GM12878 (cell line): ENCODE measurements at regions of chr11 and their contacts with region 1.

Region 1: DNA sequence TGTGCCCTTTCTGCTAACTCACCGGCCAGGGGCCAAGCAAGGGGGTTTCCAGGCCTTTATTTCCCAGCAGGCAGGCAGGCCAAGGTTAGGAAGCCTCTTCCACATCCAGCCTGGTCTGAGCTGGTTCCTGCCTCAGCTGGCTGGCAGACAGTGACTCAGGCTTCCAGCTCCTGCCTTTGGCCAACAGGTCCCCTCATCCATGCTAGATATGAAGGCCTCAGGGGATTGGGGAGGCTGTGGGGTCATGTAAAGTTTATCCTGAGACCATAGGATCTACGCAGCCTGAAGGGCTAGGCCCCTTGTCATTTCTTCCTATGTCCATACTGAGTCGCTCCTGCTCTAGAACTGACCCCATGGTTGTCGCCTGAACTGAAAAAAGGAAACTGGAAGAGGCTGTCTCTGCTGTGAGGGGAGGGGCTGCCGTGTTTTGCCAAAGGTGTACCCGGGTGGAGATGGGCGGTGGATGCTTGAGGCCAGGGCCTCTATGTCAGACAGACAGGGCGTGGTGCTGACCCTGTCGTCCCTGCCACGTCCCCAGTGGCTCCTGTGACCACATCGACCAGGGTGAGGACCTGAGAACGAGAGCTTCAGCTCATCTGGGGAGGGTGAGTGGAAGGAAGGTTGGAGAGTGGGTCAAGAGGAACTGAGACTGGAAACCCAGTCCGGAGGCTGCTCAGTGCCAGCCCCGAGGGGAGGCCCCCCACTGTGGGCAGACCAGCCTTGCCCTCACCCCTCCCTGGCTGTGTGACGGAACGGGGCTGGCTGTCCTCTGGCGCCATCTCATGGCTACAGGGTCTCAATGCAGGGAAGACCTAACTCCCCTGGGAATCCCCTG is 17.0 kb downstream of the P2RY6 start:
- DNase-seq: peak; percentile 70
- ATAC-seq: peak; percentile 95
- H3K4me3 ChIP-seq: 0 out of 2 replicates have a peak overlapping the region, but pooled peaks have one; percentile 9
- H3K27ac ChIP-seq: peak overlapping the region; percentile 49
- H3K4me1 ChIP-seq: peaks cover 23% of the 10 kb centered on the region
- H3K27me3 ChIP-seq: no peaks in the 10 kb centered on the region; a peak in 2 of 4 replicates
- CTCF ChIP-seq: peak; percentile 92 to 99 (median 97)
- EP300 ChIP-seq: 0 out of 4 replicates have a peak, but pooled peaks of 1 of the 2 experiments have one; percentile 6
- POLR2A ChIP-seq: no peak
- RAD21 ChIP-seq: peak; percentile 94

Region 2: DNA sequence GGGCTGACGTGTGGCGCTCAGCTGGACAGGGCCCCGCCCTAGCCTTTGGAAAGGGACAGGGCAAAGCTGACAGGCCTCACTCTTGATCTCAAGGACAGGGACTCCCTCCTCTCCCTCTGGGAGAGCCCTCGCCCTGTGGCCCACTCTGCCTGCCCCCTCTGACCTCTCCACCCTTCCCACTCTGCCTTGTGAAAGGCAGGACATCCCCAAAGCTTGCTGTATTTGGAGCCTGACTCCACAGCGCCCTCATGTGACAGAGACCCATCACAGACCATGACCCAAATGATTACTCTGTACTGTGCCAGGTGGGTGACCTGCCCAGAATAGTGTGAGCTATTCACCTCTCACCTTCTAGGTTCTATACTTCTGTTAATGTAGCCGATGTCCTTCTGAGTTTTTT is 52.2 kb before region 1 on chr11:
- CTCF ChIA-PET with region 1: interaction called, 25 read pairs
- POLR2A ChIA-PET with region 1: no interaction called
- RAD21 ChIA-PET with region 1: interaction called, 18 read pairs
- SMC1A ChIA-PET with region 1: interaction called, 4 read pairs
- in situ Hi-C with region 1: no loop called
- intact Hi-C with region 1: loop called (anchors 1 kb)
- DNase-seq: no peak
- ATAC-seq: peak; percentile 84
- H3K4me3 ChIP-seq: no peak overlapping the region
- H3K27ac ChIP-seq: no peak overlapping the region
- H3K4me1 ChIP-seq: peaks cover 2% of the 10 kb centered on the region
- H3K27me3 ChIP-seq: no peaks in the 10 kb centered on the region
- CTCF ChIP-seq: peak; percentile 69 to 82 (median 72)
- EP300 ChIP-seq: no peak
- POLR2A ChIP-seq: no peak
- RAD21 ChIP-seq: peak; percentile 76

Region 3: DNA sequence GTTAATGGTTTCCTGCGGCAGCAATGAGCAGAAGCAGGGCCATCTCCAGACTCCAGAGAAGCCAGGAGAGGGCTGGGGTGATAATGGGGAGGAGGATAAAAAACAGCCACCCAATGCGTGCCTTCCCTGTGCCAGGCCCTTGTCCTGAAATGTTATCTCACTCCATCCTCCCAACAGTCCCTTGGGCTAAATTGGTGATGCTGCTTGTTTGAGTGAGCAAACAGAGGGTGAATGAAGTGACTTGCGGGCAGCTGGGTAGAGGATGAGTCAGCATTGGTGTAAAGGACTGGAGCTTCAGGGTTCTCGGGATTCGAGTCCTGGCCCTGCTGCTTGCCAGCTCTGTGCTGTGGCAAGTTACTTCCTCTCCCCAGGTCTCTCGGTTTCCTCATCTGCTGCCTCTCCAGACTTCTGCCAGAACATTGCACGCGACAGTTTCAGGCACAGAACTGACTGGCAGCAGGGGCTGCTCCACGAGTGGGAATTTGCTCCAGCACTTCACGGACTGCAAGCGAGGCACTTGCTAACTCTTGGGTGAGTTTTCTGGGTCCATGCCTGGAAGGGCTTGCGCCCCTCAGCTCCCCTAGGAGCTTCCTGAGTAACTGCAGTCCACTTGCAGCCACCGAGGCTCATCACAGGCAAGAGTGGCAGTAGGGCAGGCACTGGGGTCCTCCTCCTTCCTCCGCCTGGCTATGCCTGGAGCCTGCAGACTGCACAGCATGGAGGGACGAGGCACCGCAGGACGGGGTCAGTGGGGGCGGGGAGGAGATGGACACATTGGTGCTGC is 17.0 kb before region 1 on chr11 and contains the start of gene P2RY6:
- CTCF ChIA-PET with region 1: interaction called, 6 read pairs
- POLR2A ChIA-PET with region 1: interaction called, 4 read pairs
- RAD21 ChIA-PET with region 1: interaction called, 3 read pairs
- SMC1A ChIA-PET with region 1: interaction called, 11 read pairs
- in situ Hi-C with region 1: no loop called
- intact Hi-C with region 1: no loop called
- DNase-seq: no peak
- ATAC-seq: peak; percentile 71
- H3K4me3 ChIP-seq: peak within 1 kb of the TSS; percentile 3; the same call in 1 of the 2 replicates
- H3K27ac ChIP-seq: no peak within 1 kb of the TSS; the same call in 1 of the 2 replicates
- H3K4me1 ChIP-seq: peaks cover 36% of the 10 kb centered on the region
- H3K27me3 ChIP-seq: no peaks in the 10 kb centered on the region; a peak in 1 of 4 replicates
- CTCF ChIP-seq: no peak
- EP300 ChIP-seq: no peak
- POLR2A ChIP-seq: no peak
- RAD21 ChIP-seq: no peak
- polyA plus RNA-seq, gene P2RY6: 0.05 TPM in 1 of 2 experiments, not detected in the other

Region 4: DNA sequence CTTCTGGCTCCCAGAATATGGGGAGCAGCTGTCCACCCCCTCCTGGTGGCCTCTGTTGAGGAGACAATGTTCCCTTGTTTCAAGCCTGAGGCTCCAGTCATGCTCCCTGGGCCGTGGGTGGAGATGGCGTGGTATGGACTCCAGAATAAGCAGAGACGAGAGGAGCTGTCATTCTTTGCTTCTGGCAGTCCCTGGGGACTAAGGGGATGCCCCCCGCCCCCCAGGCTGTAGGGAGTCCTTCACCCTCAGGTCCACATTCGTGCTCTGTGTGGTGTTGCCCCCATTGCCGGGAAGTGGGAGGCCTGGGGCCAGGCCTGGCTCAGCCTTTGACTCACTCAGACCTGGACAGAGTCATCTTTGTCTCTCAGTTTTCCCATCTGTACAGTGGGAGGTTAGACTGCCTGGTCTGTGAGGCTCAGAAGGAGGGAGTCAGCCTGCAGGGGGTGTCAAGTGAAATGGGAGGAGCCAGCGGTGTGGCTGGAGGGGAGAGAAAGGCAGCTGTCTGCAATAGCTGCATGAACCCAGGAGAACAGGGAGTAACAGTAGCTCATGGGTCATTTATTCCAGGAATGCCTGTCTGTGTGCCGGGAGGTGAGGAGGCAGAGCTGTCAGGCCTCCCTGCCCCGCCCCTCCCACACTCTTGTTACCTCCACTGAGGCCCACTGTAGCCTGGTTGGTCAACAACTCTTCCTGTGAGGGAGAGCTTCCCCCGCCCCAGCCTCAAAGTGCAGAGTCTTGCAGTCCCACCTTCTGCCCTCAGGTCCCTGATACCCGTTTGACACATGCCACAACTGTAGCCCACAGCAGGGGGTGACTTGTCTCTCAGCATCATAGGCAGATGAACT is 25.2 kb after region 1 on chr11:
- CTCF ChIA-PET with region 1: interaction called, 10 read pairs
- POLR2A ChIA-PET with region 1: no interaction called
- RAD21 ChIA-PET with region 1: interaction called, 7 read pairs
- SMC1A ChIA-PET with region 1: interaction called, 8 read pairs
- in situ Hi-C with region 1: no loop called
- intact Hi-C with region 1: no loop called
- DNase-seq: no peak
- ATAC-seq: peak; percentile 73
- H3K4me3 ChIP-seq: peak overlapping the region; percentile 16
- H3K27ac ChIP-seq: peak overlapping the region; percentile 63
- H3K4me1 ChIP-seq: peaks cover 14% of the 10 kb centered on the region
- H3K27me3 ChIP-seq: no peaks in the 10 kb centered on the region
- CTCF ChIP-seq: no peak
- EP300 ChIP-seq: no peak
- POLR2A ChIP-seq: no peak
- RAD21 ChIP-seq: no peak

Region 5: GRCh38 chr11:73335204-73335923 is 46.3 kb after region 1 on chr11:
- CTCF ChIA-PET with region 1: interaction called, 326 read pairs
- POLR2A ChIA-PET with region 1: interaction called, 3 read pairs
- RAD21 ChIA-PET with region 1: interaction called, 30 read pairs
- SMC1A ChIA-PET with region 1: interaction called, 24 read pairs
- in situ Hi-C with region 1: loop called (anchors 5 kb)
- intact Hi-C with region 1: no loop called
- DNase-seq: no peak
- ATAC-seq: peak; percentile 78
- H3K4me3 ChIP-seq: no peak overlapping the region
- H3K27ac ChIP-seq: 0 out of 2 replicates have a peak overlapping the region, but pooled peaks have one; percentile 40
- H3K4me1 ChIP-seq: peaks cover 14% of the 10 kb centered on the region
- H3K27me3 ChIP-seq: no peaks in the 10 kb centered on the region
- CTCF ChIP-seq: peak; percentile 98 to 99 (median 98); a peak in 5 of 6 replicates
- EP300 ChIP-seq: 0 out of 4 replicates have a peak, but pooled peaks of 1 of the 2 experiments have one; percentile 8
- POLR2A ChIP-seq: no peak
- RAD21 ChIP-seq: peak; percentile 100